GM13976 (cell line): ENCODE measurements at regions of chr2 and their contacts with region 1.

Region 1: DNA sequence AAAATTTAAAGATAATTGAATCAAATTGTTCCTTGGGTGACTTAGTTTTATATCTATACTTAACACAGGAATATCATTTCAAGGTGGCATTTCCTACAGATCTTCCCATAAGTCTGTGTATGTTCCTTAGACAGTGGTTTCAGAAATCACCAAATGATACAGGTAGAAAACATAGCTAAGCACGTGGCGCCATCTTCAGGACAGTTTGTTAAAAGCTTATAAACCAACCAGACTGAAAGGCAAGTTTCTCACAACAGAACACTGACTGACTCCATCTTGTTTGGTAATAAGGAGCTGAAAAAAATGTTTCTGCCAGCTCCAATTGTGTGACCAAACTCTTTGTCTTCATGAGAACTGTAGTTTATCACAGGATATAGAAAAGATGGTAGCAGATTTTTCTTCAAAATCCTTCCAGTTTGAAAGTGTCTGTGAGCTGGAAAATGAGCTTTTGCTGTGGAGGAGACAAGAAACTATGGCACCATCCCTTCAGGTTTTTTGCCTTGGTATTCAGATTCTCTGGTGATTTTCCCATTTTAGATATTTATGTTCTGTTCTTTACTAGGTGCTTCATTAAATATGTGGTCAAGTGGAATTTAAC is 34.8 kb upstream of the NEUROD1 start:
- DNase-seq: peak; percentile 59
- CTCF ChIP-seq: peak; percentile 55

Region 2: DNA sequence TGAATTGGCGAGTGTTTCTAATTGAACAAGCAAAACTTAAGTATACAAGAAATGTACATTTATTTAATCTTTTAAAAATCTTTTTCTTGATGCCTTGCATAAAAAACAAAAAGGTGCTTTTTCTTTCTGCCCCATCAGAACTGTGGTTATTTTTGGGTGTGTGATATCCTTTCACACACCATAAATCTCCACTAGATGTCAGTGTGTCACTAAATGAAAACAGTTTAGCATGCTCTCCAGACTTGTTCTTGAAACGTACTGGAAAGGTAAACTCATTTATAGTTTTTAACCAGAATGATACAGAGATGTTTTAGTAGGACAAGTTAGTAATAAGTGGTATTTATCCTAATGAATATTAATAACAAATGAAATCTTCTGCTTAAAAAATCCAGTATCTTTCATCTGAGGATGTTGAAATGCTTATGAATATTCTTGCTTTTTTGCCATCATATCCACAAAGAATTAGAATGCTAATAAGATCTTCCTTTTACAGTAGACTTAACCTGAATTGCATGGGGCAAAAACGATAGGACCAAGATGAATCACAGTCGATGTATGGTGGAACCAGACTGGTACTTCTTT is 637.9 kb before region 1 on chr2:
- in situ Hi-C with region 1: loop called (anchors 10 kb)
- DNase-seq: peak; percentile 37
- CTCF ChIP-seq: peak; percentile 66

Region 3: GRCh38 chr2:181573140-181573736 is 141.9 kb before region 1 on chr2:
- in situ Hi-C with region 1: loop called (anchors 10 kb)
- DNase-seq: no peak
- CTCF ChIP-seq: no peak

Region 4: DNA sequence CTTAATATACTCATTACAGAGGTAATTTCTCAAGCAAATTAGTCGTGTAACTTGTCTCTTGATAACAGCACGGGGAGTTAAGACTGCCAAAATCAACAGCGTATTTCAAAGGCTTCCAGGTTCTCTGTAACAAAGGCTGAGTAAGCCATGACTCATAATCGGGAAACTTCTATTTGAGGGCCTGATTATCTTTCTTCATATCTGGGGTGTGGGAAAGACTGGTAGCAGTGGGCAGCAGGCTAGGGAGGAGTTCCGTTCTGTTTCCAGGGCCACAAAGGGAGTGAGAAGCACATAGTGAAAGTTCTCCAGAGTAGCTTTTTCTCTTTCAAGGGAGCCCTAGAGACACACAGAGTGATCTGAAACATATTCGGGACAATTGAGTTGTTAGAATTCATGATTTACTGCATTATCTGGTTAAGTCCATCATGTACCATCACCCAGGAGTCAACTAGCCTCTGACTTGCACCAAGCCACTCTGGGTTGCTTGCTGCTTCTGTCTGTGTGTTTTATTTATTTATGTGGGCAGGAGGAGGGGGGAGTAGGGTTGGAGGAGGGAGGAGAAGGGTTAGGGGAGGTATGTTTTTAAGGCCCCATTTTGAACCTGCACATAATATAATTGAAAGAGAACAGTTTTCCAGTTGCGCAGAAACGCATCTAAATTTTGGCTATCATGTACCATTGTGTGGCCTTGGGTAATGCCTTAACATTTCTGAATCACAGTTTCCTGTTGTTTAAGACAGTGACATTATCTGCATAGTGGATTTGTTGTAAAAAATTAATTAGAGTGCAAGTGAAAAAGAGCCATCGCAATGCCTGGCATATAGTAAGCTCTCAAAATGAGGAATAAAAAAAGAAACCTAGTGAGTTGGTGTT is 95.9 kb after region 1 on chr2:
- in situ Hi-C with region 1: no loop called
- DNase-seq: no peak
- CTCF ChIP-seq: no peak